Colonic mucosa (tissue), 4 donors: ENCODE measurements at regions of chr1 and their contacts with region 1.

Region 1: DNA sequence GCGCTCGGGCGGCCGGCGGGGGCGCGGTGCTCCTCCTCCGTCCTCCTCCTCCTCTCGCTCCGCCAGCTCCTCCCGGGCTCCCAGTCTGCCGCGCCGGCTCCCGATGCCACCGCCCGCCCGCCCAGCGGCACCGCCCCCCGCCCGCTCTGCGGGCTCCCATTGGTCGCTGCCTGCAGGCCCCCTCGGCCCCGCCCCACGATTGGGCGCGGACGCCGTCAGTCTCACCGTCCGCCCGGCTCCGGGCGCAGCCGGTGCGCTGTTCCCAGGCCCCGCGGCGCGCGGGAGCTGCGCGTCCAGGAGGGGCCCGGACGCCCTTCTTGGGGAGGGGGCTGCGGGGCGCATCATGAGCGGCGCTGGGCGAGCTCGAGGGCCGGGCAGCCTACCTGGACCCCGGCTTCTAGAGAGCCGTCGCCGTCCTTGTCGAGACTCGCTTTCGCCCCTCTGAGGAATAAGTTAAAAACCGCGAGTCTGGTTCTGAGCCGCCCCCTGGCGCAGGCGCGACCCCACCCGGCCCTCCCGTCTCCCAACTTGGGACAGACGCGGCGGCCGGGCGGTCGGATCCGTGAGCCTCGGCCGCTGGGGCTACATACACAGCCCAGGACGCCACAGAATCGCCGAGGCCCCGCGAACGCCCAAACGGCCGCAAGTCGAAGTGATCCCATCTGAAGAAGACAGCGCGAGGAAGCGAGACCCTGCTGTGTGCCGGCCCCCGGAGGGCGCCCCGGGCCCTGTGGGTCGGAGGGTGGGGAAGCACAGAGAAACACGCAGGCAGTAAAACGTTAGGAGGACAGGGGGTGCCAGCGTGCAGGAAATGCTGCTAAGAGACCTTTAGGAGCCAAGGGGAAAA is at the start of gene SIPA1L2:
- DNase-seq: peak; percentile 95
- H3K4me3 ChIP-seq: peak within 1 kb of the TSS; percentile 86
- H3K27ac ChIP-seq: peak within 1 kb of the TSS; percentile 94
- H3K4me1 ChIP-seq: peaks cover 5% of the 10 kb centered on the region
- H3K27me3 ChIP-seq: peaks cover under 1% of the 10 kb centered on the region
- CTCF ChIP-seq: peak; percentile 34
- total RNA-seq, gene SIPA1L2: 53.6 to 64.4 TPM

Region 2: GRCh38 chr1:232457595-232457994 is 172.7 kb before region 1 on chr1:
- intact Hi-C with region 1: no loop called
- DNase-seq: no peak
- H3K4me3 ChIP-seq: no peak overlapping the region
- H3K27ac ChIP-seq: no peak overlapping the region
- H3K4me1 ChIP-seq: no peaks in the 10 kb centered on the region
- H3K27me3 ChIP-seq: no peaks in the 10 kb centered on the region
- CTCF ChIP-seq: no peak

Region 3: DNA sequence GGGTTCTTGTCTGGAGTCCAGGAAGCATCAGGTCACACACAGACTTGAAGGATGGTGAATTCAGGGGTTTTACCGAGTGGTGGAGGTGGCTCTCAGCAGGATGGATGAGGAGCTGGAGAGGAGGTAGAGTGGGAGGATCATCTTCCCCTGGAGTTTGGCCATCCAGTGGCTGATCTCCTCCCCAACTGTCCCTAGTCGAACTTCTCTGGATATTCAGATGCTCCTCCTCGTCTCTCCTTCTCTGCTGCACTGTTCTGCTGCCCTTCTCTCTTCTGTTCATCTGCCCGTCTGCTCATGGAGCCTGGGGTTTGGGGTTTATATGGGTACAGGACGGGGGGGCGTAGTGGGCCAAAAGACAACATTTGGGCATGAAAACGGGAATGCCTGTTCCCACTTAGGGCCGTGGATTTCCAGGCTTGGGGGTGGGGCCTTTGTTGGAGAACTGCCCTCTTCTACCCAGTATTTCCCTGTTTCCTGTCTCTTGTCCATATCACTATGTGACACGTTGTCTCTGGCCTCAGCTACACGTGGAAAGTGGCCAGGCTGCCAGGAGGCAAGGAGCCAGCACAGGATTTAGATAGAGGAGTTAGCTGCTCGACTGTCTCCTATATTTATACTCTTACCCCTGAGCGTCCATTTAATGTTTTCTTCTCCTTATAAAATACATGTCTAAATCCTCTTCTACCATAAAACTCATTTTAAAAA is 77.1 kb before region 1 on chr1:
- intact Hi-C with region 1: loop called (anchors 10 kb)
- DNase-seq: peak; percentile 62
- H3K4me3 ChIP-seq: no peak overlapping the region
- H3K27ac ChIP-seq: no peak overlapping the region
- H3K4me1 ChIP-seq: peaks cover 5% of the 10 kb centered on the region
- H3K27me3 ChIP-seq: no peaks in the 10 kb centered on the region
- CTCF ChIP-seq: no peak

Region 4: DNA sequence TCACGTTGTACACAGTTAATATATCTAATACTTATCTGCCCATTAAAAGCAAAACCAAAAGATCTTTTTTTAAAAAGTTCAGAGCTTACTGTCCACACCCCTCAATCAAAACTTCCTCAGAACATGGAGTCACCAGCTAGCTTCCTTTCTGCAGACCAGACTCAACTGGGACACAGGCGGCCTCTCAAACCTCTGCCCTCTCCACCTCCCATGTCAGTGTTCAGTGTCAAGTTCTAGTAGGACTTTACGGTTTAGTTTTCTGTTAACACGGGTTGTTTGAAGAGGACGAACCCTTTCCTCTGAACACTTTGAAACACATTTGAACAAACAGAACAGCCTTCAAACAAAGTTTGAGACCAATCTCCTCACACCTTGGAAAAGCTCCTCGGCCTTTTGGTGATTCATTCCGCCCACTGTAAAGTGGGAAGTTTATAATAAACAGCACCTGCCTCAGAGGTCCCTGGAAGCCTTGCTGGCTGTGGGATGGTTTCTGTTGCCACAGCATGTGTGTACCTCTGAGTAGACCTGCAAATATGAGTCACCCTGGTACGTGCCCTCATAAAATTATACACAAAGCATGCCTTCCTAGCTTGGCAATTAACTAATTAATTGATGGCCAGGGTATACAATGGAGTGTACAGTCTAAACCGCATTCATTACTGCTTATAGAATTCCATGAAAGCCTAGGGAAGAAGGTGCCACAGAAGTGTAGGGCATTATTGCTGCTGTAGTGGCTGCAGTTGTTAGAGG is 48.1 kb after region 1 on chr1:
- intact Hi-C with region 1: no loop called
- DNase-seq: peak; percentile 74
- H3K4me3 ChIP-seq: no peak overlapping the region
- H3K27ac ChIP-seq: peak overlapping the region; percentile 70
- H3K4me1 ChIP-seq: no peaks in the 10 kb centered on the region
- H3K27me3 ChIP-seq: no peaks in the 10 kb centered on the region
- CTCF ChIP-seq: no peak

Region 5: GRCh38 chr1:232822530-232822929 is 192.3 kb after region 1 on chr1:
- intact Hi-C with region 1: no loop called
- DNase-seq: no peak
- H3K4me3 ChIP-seq: no peak overlapping the region
- H3K27ac ChIP-seq: no peak overlapping the region
- H3K4me1 ChIP-seq: no peaks in the 10 kb centered on the region
- H3K27me3 ChIP-seq: no peaks in the 10 kb centered on the region
- CTCF ChIP-seq: no peak

Region 6: GRCh38 chr1:232904566-232904965 is 274.3 kb after region 1 on chr1:
- intact Hi-C with region 1: loop called (anchors 10 kb)
- DNase-seq: no peak
- H3K4me3 ChIP-seq: no peak overlapping the region
- H3K27ac ChIP-seq: peak overlapping the region; percentile 64
- H3K4me1 ChIP-seq: peaks cover 11% of the 10 kb centered on the region
- H3K27me3 ChIP-seq: no peaks in the 10 kb centered on the region
- CTCF ChIP-seq: no peak

Region 7: GRCh38 chr1:232962771-232963745 is 332.8 kb after region 1 on chr1:
- intact Hi-C with region 1: loop called (anchors 5 kb)
- DNase-seq: no peak
- H3K4me3 ChIP-seq: no peak overlapping the region
- H3K27ac ChIP-seq: peak overlapping the region; percentile 17
- H3K4me1 ChIP-seq: no peaks in the 10 kb centered on the region
- H3K27me3 ChIP-seq: no peaks in the 10 kb centered on the region
- CTCF ChIP-seq: no peak

Region 8: GRCh38 chr1:233025157-233025915 is 395.1 kb after region 1 on chr1:
- intact Hi-C with region 1: loop called (anchors 2 kb)
- DNase-seq: peak; percentile 77
- H3K4me3 ChIP-seq: no peak overlapping the region
- H3K27ac ChIP-seq: no peak overlapping the region
- H3K4me1 ChIP-seq: no peaks in the 10 kb centered on the region
- H3K27me3 ChIP-seq: no peaks in the 10 kb centered on the region
- CTCF ChIP-seq: peak; percentile 50